ENCODE measurements at regions of chr17 and their contacts with region 1.

Region 1: GRCh38 chr17:81808778-81809555 is 5.0 kb downstream of the GCGR start:
- DNase-seq: peak; percentile 46
- H3K4me3 ChIP-seq: no peak overlapping the region
- H3K27ac ChIP-seq: no peak overlapping the region
- H3K4me1 ChIP-seq: no peaks in the 10 kb centered on the region
- CTCF ChIP-seq: peak; percentile 63

Region 2: GRCh38 chr17:81733507-81734404 is 75.2 kb before region 1 on chr17:
- CTCF ChIA-PET with region 1: no interaction called
- POLR2A ChIA-PET with region 1: no interaction called
- intact Hi-C with region 1: loop called (anchors 2 kb)
- DNase-seq: peak; percentile 72
- H3K4me3 ChIP-seq: no peak overlapping the region
- H3K27ac ChIP-seq: no peak overlapping the region
- H3K4me1 ChIP-seq: no peaks in the 10 kb centered on the region
- CTCF ChIP-seq: peak; percentile 95

Measured in OCI-LY7 (cell line).